AG04450 (cell line): ENCODE measurements at regions of chr1 and their contacts with region 1.

Region 1: DNA sequence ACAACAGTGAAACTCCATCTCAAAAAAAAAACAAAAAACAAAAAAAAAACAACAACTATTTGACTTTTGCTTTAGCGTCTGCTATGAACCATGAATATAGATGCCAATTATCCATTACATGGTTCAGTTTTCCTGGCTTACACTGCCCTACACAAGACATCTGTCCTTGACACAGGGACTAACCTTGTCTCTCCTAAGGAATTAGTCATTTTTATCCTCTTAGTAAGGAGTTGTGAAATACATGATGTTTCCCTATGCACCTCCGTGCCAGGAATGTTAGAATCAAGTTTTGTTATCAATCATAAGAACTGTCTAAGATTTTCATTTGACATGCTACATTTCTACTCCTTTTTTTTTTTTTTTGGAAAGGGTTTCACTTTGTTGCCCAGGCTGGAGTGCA is 241.8 kb downstream of the KIF26B start:
- DNase-seq: no peak
- H3K4me3 ChIP-seq: no peak overlapping the region
- H3K27ac ChIP-seq: no peak overlapping the region
- H3K27me3 ChIP-seq: no peaks in the 10 kb centered on the region
- CTCF ChIP-seq: no peak

Region 2: DNA sequence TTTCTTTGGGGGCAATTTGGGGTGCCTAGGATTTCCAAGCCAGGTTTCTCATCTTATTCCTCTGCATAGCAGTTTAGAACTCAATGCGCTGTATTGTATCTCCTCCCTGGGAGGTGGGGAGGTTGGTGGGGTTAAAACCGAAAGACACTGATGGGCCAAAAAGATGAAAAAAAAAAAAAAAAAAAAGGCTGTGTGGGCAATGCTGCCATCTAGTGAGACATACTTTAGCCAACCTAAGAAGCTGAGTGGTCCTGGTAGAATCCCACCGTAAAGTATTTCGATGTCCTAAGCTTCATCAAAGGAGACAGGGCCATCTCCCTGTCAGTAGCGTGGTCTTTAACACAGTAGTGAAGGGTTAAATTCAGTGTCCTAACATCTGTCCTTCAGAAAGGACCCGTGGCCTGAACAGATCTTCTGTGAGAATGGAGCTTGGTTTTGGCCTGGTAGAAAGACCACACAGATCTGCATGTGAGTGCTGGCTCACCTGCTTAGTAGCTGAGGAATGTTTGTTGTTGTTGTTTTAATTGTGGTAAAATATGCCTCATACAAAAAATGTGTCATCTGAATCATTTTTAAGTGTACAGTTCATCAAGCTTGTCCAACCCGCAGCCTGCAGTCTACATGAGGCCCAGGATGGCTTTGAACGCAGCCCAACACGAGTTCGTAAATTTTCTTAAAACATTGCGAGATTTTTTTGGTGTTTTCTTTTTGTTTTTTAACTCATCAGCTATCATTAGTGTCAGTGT is 15.7 kb before region 1 on chr1:
- CTCF ChIA-PET with region 1: interaction called, 11 read pairs
- POLR2A ChIA-PET with region 1: no interaction called
- DNase-seq: no peak
- H3K4me3 ChIP-seq: no peak overlapping the region
- H3K27ac ChIP-seq: no peak overlapping the region
- H3K27me3 ChIP-seq: no peaks in the 10 kb centered on the region
- CTCF ChIP-seq: peak; percentile 51